ENCODE measurements at regions of chr11 and their contacts with region 1.

Region 1: DNA sequence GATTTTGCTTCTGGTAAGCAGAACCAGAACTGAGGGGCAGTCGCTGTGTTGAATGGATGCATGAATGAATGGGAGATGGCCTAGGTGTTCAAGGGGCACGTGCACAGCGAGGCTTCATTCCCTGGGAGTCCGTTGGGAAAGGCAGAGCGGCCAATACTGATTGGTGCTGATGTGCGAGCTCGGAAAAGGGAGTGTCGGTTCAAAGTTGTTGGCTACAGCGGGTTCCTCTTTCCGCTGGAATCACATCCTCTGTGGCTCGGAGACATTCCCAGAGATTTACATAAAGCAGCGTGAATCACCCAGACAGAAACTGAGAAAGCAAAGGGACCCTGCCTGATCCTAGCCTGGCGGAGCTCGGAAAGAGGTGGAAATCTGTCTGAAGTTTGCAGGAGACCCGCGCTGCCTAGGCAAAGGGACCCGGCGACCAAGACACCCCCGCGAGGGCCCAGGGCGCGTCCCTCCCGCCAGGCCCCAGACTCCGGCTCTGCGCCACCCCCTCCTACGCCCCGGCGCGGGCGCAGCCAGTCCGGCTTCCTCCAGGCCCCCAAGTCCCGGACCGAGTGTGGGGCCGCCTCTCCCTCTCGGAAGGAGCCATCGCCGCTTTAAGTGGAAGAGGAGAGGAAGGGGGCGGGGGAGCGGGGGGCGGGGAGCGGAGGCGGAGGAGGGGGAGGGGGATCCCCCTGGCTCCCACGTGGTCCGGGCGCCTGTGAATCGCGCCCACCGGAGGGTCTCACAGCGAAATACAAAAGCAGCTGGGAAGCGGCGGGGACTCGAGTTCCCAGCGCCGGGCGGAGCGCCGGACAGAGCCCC is at the start of gene FJX1:
- DNase-seq: peak in 3 of 14 experiments; percentile 15 to 36 (median 32)
- ATAC-seq: no peak
- H3K4me3 ChIP-seq: peak within 1 kb of the TSS; percentile 12
- H3K4me3 Mint-ChIP-seq: peak within 1 kb of the TSS; percentile 80
- H3K27ac ChIP-seq: no peak within 1 kb of the TSS
- H3K27ac Mint-ChIP-seq: no peak within 1 kb of the TSS
- H3K4me1 ChIP-seq: peaks cover 19% of the 10 kb centered on the region
- H3K4me1 Mint-ChIP-seq: peaks cover 22% of the 10 kb centered on the region
- H3K27me3 ChIP-seq: peaks cover 33 to 71% of the 10 kb centered on the region in 2 experiments
- H3K27me3 Mint-ChIP-seq: peaks cover 73% of the 10 kb centered on the region
- CTCF ChIP-seq: no peak
- total RNA-seq, gene FJX1: not detected

Region 2: DNA sequence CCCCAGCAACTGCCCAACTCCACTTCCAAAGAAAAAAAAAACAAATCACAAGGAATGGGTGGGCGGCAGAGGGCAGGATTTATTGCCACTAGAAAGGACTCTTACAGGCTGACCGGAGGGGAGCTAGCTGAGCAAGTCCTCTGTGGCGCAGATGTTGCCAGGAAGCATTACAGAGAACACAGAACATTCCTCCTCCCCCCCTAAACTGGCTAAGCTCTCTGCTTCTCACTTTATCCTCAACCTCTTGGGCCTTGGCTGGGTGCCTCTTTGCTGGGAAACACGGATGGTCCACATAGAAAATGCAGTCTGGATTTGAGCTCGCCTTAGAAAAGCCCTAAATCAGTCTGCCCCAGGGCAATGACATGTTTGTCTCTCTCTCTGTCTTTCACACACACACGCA is 12.2 kb before region 1 on chr11:
- CTCF ChIA-PET with region 1: no interaction called
- POLR2A ChIA-PET with region 1: no interaction called
- intact Hi-C with region 1: no loop called
- DNase-seq: no peak
- ATAC-seq: no peak
- H3K4me3 ChIP-seq: no peak overlapping the region
- H3K4me3 Mint-ChIP-seq: no peak overlapping the region
- H3K27ac ChIP-seq: no peak overlapping the region
- H3K27ac Mint-ChIP-seq: no peak overlapping the region
- H3K4me1 ChIP-seq: no peaks in the 10 kb centered on the region
- H3K4me1 Mint-ChIP-seq: no peaks in the 10 kb centered on the region
- H3K27me3 ChIP-seq: peaks cover 9 to 16% of the 10 kb centered on the region in 2 experiments
- H3K27me3 Mint-ChIP-seq: peaks cover 79% of the 10 kb centered on the region
- CTCF ChIP-seq: no peak

Region 3: GRCh38 chr11:35688023-35688422 is 70.1 kb after region 1 on chr11:
- CTCF ChIA-PET with region 1: no interaction called
- POLR2A ChIA-PET with region 1: no interaction called
- intact Hi-C with region 1: no loop called
- DNase-seq: peak in 1 of 14 experiments; percentile 30
- ATAC-seq: no peak
- H3K4me3 ChIP-seq: no peak overlapping the region
- H3K4me3 Mint-ChIP-seq: no peak overlapping the region
- H3K27ac ChIP-seq: no peak overlapping the region
- H3K27ac Mint-ChIP-seq: no peak overlapping the region
- H3K4me1 ChIP-seq: no peaks in the 10 kb centered on the region
- H3K4me1 Mint-ChIP-seq: peaks cover 46% of the 10 kb centered on the region
- H3K27me3 ChIP-seq: no peaks in the 10 kb centered on the region
- H3K27me3 Mint-ChIP-seq: no peaks in the 10 kb centered on the region
- CTCF ChIP-seq: no peak

Region 4: GRCh38 chr11:36131721-36132397 is 514.0 kb after region 1 on chr11:
- CTCF ChIA-PET with region 1: no interaction called
- POLR2A ChIA-PET with region 1: no interaction called
- intact Hi-C with region 1: loop called (anchors 2 to 10 kb)
- DNase-seq: peak in 3 of 14 experiments; percentile 3 to 13 (median 6)
- ATAC-seq: no peak
- H3K4me3 ChIP-seq: no peak overlapping the region
- H3K4me3 Mint-ChIP-seq: no peak overlapping the region
- H3K27ac ChIP-seq: no peak overlapping the region
- H3K27ac Mint-ChIP-seq: no peak overlapping the region
- H3K4me1 ChIP-seq: no peaks in the 10 kb centered on the region
- H3K4me1 Mint-ChIP-seq: no peaks in the 10 kb centered on the region
- H3K27me3 ChIP-seq: peaks cover 0 to 6% of the 10 kb centered on the region in 2 experiments
- H3K27me3 Mint-ChIP-seq: peaks cover 20% of the 10 kb centered on the region
- CTCF ChIP-seq: no peak

Region 5: DNA sequence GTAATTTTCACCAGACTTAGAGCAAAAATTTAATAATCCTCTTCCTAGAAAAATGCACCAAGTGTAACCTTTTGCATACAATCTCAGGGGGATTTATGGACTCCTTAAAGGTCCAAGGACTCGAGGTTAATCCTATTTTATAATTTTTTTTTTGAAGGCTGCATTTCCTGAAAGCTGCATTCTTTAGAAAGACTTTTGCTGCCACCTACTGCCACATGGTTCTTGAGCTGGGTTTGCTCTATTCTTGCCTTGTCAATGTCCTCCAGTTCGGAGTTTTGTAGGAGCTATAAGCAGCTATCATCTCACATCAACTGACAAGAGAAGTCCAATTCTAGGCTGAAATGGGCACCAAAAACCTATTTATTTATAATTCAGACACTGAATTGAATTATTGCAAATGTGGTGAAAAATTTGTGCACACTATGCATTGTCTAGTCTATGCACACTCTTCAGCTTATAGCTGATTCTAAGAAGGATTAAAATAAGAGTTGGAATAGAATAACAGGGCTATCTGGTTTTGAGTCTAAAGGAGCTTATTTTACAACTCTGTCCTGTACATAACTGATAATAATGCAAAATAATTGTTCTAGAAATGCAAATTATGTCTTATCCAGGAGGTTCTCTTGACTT is 860.9 kb after region 1 on chr11:
- CTCF ChIA-PET with region 1: no interaction called
- POLR2A ChIA-PET with region 1: no interaction called
- intact Hi-C with region 1: loop called in 1 of 2 experiments (anchors 1 kb)
- DNase-seq: peak in 5 of 14 experiments; percentile 7 to 70 (median 56)
- ATAC-seq: no peak
- H3K4me3 ChIP-seq: no peak overlapping the region
- H3K4me3 Mint-ChIP-seq: no peak overlapping the region
- H3K27ac ChIP-seq: no peak overlapping the region
- H3K27ac Mint-ChIP-seq: no peak overlapping the region
- H3K4me1 ChIP-seq: peaks cover 2% of the 10 kb centered on the region
- H3K4me1 Mint-ChIP-seq: peaks cover 2% of the 10 kb centered on the region
- H3K27me3 ChIP-seq: no peaks in the 10 kb centered on the region
- H3K27me3 Mint-ChIP-seq: no peaks in the 10 kb centered on the region
- CTCF ChIP-seq: peak; percentile 57

Region 6: GRCh38 chr11:36672813-36673450 is 1055.0 kb after region 1 on chr11:
- CTCF ChIA-PET with region 1: no interaction called
- POLR2A ChIA-PET with region 1: no interaction called
- intact Hi-C with region 1: loop called (anchors 5 to 10 kb)
- DNase-seq: peak in 5 of 14 experiments; percentile 2 to 64 (median 47)
- ATAC-seq: no peak
- H3K4me3 ChIP-seq: no peak overlapping the region
- H3K4me3 Mint-ChIP-seq: no peak overlapping the region
- H3K27ac ChIP-seq: no peak overlapping the region
- H3K27ac Mint-ChIP-seq: no peak overlapping the region
- H3K4me1 ChIP-seq: no peaks in the 10 kb centered on the region
- H3K4me1 Mint-ChIP-seq: no peaks in the 10 kb centered on the region
- H3K27me3 ChIP-seq: peaks cover 0 to 8% of the 10 kb centered on the region in 2 experiments
- H3K27me3 Mint-ChIP-seq: peaks cover 38% of the 10 kb centered on the region
- CTCF ChIP-seq: peak; percentile 97